Panc1 (cell line): ENCODE measurements at regions of chr12 and their contacts with region 1.

Region 1: GRCh38 chr12:29073628-29074239 is 75.3 kb upstream of the FAR2 start:
- DNase-seq: peak; percentile 42
- ATAC-seq: peak; percentile 73; the same call in 1 of the 2 replicates
- H3K4me3 ChIP-seq: no peak overlapping the region
- H3K27ac ChIP-seq: no peak overlapping the region
- H3K4me1 ChIP-seq: no peaks in the 10 kb centered on the region
- H3K27me3 ChIP-seq: no peaks in the 10 kb centered on the region
- CTCF ChIP-seq: peak; percentile 77

Region 2: DNA sequence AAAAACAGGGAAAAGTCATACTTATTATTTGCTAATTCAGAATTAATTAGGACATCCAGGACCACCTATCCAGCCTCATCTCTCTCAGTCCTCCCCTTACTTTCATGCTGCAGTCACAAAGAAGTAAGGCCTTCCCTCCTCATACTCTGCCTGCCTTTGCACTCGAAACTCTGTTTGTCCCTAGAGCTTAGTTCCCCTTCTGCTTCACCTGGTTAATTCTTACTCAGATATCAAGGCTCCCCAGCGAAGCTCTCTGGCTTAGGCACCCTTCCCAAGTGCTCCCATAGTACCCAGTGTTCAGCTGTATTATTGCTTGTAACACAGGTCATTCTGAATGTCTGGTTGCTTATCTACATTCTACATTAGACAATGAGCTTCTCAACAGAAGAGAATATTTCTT is 225.9 kb after region 1 on chr12:
- CTCF ChIA-PET with region 1: no interaction called
- POLR2A ChIA-PET with region 1: interaction called, 16 read pairs
- in situ Hi-C with region 1: no loop called
- intact Hi-C with region 1: no loop called
- DNase-seq: no peak
- ATAC-seq: no peak
- H3K4me3 ChIP-seq: no peak overlapping the region
- H3K27ac ChIP-seq: no peak overlapping the region
- H3K4me1 ChIP-seq: no peaks in the 10 kb centered on the region
- H3K27me3 ChIP-seq: no peaks in the 10 kb centered on the region
- CTCF ChIP-seq: no peak

Region 3: GRCh38 chr12:29317556-29318363 is 244.0 kb after region 1 on chr12:
- CTCF ChIA-PET with region 1: interaction called, 7 read pairs
- POLR2A ChIA-PET with region 1: no interaction called
- in situ Hi-C with region 1: no loop called
- intact Hi-C with region 1: loop called (anchors 5 kb)
- DNase-seq: peak; percentile 69
- ATAC-seq: peak; percentile 98
- H3K4me3 ChIP-seq: no peak overlapping the region
- H3K27ac ChIP-seq: no peak overlapping the region
- H3K4me1 ChIP-seq: no peaks in the 10 kb centered on the region
- H3K27me3 ChIP-seq: no peaks in the 10 kb centered on the region
- CTCF ChIP-seq: peak; percentile 91